Heart right ventricle (tissue), 16 donors: ENCODE measurements at regions of chr16 and their contacts with region 1.

Region 1: DNA sequence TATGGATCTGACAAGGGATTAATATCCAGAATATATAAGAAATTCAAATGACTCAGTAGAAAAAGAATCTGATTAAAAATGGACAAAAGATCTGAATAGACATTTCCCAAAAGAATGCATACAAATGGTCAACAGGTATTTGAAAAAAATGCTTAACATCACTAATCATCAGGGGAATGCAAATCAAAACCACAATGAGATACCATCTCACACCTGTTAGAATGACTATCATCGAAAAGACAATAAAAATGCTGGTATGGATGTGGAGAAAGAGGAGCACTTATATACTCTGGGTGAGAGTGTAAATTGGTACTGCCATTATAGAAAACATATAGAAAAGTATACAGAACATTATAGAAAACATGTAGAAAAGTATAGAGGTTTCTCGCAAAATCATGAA is 16.4 kb upstream of the HS3ST2 start:
- DNase-seq: no peak
- ATAC-seq: no peak
- H3K4me3 ChIP-seq: no peak overlapping the region
- H3K27ac ChIP-seq: no peak overlapping the region
- H3K4me1 ChIP-seq: no peaks in the 10 kb centered on the region
- H3K27me3 ChIP-seq: peaks cover 0 to 18% (median 9%) of the 10 kb centered on the region in 7 donors
- CTCF ChIP-seq: no peak

Region 2: DNA sequence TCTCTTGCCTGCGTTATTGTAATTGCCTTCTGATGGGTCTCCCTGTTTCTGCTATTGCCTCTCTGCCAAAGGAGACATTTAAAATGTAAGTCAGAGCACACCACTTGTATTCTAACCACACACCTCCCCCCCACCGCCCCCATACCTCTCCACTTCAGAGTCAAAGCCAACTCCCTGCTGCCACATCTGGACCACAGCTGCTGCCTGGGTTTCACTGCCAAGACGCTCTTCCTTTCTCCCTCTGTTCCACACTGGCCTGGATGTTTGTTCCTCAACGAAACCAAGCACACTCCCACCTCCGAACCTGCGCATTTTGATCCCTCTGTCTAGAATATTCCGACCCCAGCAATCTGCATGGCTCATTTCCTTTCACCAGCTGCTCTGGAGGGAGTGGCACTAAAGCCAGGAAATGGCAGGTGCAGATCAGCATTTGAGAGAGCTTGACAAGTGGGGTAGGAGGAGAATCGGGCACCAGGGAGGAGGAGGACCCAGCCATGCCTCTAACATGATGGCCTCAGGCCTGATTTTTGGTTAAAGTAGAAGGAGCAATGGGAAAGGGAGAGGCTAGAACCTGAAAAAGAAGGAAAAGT is 75.9 kb before region 1 on chr16:
- intact Hi-C with region 1: loop called in 1 of 10 experiments (anchors 10 kb)
- DNase-seq: peak in 1 of 2 donors; percentile 5
- ATAC-seq: peak in 6 of 8 donors; percentile 55 to 84 (median 76)
- H3K4me3 ChIP-seq: no peak overlapping the region
- H3K27ac ChIP-seq: no peak overlapping the region
- H3K4me1 ChIP-seq: no peaks in the 10 kb centered on the region
- H3K27me3 ChIP-seq: peaks cover 0 to 24% (median 5%) of the 10 kb centered on the region in 7 donors
- CTCF ChIP-seq: no peak

Region 3: DNA sequence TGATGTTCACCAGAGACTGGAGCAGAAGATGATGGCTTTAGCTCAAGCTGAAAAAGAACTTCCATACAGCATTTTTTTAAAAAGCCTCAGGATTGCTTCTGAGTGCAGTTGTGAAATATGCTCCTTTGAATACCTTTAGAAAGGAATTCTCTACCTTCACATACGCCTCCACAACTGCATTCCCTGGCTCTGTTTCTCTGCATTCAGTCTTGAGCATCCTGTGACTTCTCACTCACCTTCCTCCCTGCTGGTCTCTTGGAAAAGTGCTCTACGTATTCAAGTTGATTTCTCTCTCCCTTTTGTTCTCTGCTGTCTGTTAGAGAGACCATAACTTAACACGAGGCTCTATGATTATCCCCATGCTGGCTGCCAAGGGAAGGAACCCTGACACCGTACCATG is 50.9 kb after region 1 on chr16:
- intact Hi-C with region 1: no loop called
- DNase-seq: no peak
- ATAC-seq: no peak
- H3K4me3 ChIP-seq: no peak overlapping the region
- H3K27ac ChIP-seq: no peak overlapping the region
- H3K4me1 ChIP-seq: peaks cover 0 to 2% (median 0%) of the 10 kb centered on the region in 9 donors
- H3K27me3 ChIP-seq: peaks cover 0 to 28% (median 3%) of the 10 kb centered on the region in 7 donors
- CTCF ChIP-seq: no peak